GM12878 (cell line): ENCODE measurements at regions of chr21 and their contacts with region 1.

Region 1: DNA sequence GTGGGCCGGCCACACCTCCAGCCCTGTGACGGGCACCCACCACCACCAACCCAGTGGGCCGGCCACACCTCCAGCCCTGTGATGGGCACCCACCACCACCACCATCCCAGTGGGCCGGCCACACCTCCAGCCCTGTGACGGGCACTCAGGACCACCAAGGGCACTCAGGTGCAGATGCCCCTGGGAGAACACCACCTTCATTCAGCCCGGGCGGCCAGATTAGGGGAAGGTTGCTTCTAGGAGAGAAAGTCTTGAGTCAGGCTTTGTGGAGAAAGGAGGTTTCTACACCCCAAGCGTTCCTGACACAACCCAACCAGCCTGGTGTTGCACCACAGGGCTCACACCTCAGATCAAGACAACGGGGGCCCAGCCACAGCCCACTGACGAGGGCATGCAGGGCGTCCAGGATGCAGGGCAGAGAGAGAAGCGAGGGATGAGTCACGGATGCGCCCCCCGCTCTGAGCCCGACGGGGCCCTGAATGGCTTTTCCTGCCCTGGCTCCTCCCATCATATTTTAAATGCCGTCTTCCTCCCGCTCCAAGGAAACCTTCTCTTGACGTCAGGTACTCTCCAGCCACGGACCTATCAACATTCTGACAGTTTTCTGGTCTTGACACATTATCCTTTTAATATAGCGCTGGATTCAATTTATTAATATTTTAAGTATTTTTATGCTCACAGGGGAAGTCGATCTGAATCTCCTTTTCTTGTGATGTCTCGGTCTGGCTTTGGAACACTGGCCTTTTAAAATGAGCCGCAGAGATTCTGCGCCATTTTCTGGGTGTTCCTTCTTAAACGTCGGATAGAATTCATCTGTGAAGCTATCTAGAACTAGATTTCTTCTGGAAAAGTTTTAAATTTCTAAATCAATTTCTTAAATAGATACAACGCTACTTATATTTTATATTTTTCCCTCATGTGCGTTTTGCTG is 631 bp upstream of the SPATC1L start:
- DNase-seq: peak; percentile 63
- ATAC-seq: peak; percentile 81
- H3K4me3 ChIP-seq: peak overlapping the region; percentile 71
- H3K27ac ChIP-seq: 0 out of 2 replicates have a peak overlapping the region, but pooled peaks have one; percentile 10
- H3K4me1 ChIP-seq: no peaks in the 10 kb centered on the region; the same call in 1 of the 2 replicates
- H3K27me3 ChIP-seq: no peaks in the 10 kb centered on the region
- CTCF ChIP-seq: no peak
- EP300 ChIP-seq: no peak
- POLR2A ChIP-seq: peak; percentile 44; the same call in 1 of the 2 replicates
- RAD21 ChIP-seq: no peak

Region 2: DNA sequence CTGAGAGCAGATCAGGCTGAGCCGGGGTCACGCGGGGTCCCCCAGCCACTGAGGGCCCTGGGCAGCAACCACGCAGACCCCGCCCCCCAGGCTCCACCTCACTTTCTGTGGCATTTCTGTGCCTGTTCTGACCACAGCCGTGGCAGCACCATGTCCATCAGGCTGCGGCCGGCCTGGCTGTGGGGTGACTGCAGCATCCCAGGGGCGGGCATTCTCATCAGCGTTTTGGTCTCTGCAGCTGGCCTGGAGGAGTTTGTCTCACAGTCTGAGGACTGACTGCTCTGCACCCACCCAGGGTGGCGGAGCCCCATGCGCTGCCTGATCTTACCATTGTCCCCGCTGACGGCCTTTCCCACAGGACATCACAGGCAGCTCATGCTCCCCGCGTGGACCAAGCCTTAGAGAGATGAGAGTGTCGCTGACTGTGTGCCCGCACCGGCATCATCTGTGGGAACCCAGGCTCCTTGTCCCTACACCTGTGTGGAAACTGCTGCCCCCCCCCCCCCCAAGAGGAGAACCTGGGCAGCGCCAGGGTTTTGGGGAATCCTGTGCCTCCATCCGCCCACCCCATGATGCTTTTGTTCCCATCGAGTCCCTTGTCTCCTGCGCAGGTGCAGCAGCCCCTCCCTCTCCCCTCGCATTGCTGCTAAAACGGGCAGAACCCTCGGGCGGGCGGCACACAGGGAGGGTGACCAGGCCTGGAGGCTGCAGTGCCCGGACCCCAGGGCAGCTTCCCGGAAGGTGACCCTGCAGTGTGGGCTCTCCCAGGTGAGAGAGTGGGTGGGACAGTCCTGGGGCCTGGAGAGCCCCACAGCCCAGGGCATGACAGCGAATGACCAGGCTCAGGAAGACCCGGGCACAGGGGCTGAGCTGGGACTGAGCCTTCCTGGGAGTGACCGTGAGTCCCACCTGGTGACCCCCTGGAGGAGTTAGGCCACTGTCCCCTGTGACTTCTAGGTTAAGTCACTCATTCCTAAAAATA is 1646.7 kb before region 1 on chr21:
- CTCF ChIA-PET with region 1: no interaction called
- POLR2A ChIA-PET with region 1: no interaction called
- RAD21 ChIA-PET with region 1: no interaction called
- SMC1A ChIA-PET with region 1: no interaction called
- in situ Hi-C with region 1: no loop called
- intact Hi-C with region 1: no loop called
- DNase-seq: no peak
- ATAC-seq: no peak
- H3K4me3 ChIP-seq: no peak overlapping the region
- H3K27ac ChIP-seq: no peak overlapping the region
- H3K4me1 ChIP-seq: no peaks in the 10 kb centered on the region
- H3K27me3 ChIP-seq: no peaks in the 10 kb centered on the region
- CTCF ChIP-seq: no peak
- EP300 ChIP-seq: no peak
- POLR2A ChIP-seq: no peak
- RAD21 ChIP-seq: no peak

Region 3: DNA sequence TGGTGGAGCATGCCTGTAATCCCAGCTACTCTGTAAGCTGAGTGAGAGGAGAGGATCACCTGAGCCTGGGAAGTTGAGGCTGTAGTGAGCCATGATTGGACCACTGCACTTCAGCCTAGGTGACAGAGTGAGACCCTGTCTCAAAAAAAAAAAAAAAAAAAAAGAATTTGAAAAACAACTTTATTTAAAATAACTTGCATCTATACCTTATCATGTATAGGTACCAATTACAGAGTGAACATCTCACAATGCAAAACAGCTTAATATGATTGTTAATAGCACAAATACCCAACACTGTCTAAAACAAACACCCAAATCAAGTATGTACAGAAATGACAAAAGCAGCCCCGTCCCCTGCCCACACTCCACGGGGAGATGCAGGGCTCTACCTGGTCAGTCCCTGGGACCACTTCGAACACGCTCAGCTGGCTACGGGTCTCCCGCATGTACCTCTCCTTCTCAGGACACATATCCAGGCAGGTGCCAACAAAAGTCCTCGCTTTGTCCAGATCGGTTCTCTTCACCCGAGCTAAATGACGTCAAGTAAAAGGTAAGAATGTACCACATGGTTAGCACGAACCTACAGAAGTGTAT is 90.0 kb after region 1 on chr21:
- CTCF ChIA-PET with region 1: no interaction called
- POLR2A ChIA-PET with region 1: interaction called, 10 read pairs
- RAD21 ChIA-PET with region 1: no interaction called
- SMC1A ChIA-PET with region 1: no interaction called
- in situ Hi-C with region 1: no loop called
- intact Hi-C with region 1: no loop called
- DNase-seq: no peak
- ATAC-seq: no peak
- H3K4me3 ChIP-seq: no peak overlapping the region
- H3K27ac ChIP-seq: no peak overlapping the region
- H3K4me1 ChIP-seq: no peaks in the 10 kb centered on the region
- H3K27me3 ChIP-seq: no peaks in the 10 kb centered on the region
- CTCF ChIP-seq: no peak
- EP300 ChIP-seq: no peak
- POLR2A ChIP-seq: no peak
- RAD21 ChIP-seq: no peak